Uterus (tissue), 4 donors: ENCODE measurements at regions of chr3 and their contacts with region 1.

Region 1: GRCh38 chr3:149657926-149658733 is at the start of gene WWTR1:
- DNase-seq: peak; percentile 94 to 98
- H3K4me3 ChIP-seq: peak within 1 kb of the TSS; percentile 72 to 95
- H3K27ac ChIP-seq: peak within 1 kb of the TSS; percentile 98
- H3K4me1 ChIP-seq: peaks cover 4 to 9% of the 10 kb centered on the region in 2 donors
- H3K27me3 ChIP-seq: no peaks in the 10 kb centered on the region
- CTCF ChIP-seq: peak; percentile 10 to 25 (median 16)
- POLR2A ChIP-seq: peak; percentile 96 to 99
- total RNA-seq, gene WWTR1: 103 to 148 (median 116) TPM

Region 2: GRCh38 chr3:149299938-149300791 is 358.0 kb before region 1 on chr3:
- intact Hi-C with region 1: no loop called
- DNase-seq: peak; percentile 27 to 32
- H3K4me3 ChIP-seq: no peak overlapping the region
- H3K27ac ChIP-seq: peak overlapping the region; percentile 60 to 70
- H3K4me1 ChIP-seq: peaks cover 0 to 6% of the 10 kb centered on the region in 2 donors
- H3K27me3 ChIP-seq: no peaks in the 10 kb centered on the region
- CTCF ChIP-seq: no peak
- POLR2A ChIP-seq: no peak

Region 3: GRCh38 chr3:149460117-149460516 is 198.0 kb before region 1 on chr3:
- intact Hi-C with region 1: no loop called
- DNase-seq: peak in 1 of 2 donors; percentile 37
- H3K4me3 ChIP-seq: no peak overlapping the region
- H3K27ac ChIP-seq: peak overlapping the region; percentile 24 to 28
- H3K4me1 ChIP-seq: peaks cover 0 to 6% of the 10 kb centered on the region in 2 donors
- H3K27me3 ChIP-seq: no peaks in the 10 kb centered on the region
- CTCF ChIP-seq: no peak
- POLR2A ChIP-seq: no peak

Region 4: DNA sequence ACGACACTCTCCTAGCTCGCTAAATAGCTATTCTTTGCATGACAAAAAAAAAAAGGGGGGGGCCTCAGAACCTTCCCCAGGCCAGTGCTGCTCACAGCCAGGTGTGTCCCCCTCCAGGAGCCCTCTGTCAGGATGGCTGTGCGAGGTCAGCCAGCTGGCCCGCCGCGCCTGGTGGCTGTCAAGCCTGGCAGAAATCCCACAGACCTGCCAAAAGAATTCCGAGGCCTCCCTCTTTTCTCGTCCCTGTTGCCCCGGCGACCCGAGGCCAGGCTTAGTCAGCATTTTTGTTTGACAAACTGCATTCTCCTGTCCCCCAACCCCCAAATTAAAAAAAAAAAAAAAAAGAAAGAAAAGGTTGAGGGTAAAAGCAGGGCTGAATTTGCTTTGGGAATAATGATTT is 121.7 kb before region 1 on chr3:
- intact Hi-C with region 1: loop called (anchors 10 kb)
- DNase-seq: peak; percentile 48 to 57
- H3K4me3 ChIP-seq: no peak overlapping the region
- H3K27ac ChIP-seq: peak overlapping the region; percentile 49 to 73
- H3K4me1 ChIP-seq: peaks cover 0 to 24% of the 10 kb centered on the region in 2 donors
- H3K27me3 ChIP-seq: no peaks in the 10 kb centered on the region
- CTCF ChIP-seq: no peak
- POLR2A ChIP-seq: no peak